ENCODE measurements at regions of chr12 and their contacts with region 1.

Region 1: GRCh38 chr12:85057370-85057963 is 21.3 kb downstream of the LRRIQ1 start:
- DNase-seq: no peak
- H3K4me3 ChIP-seq: no peak overlapping the region
- H3K27ac ChIP-seq: no peak overlapping the region
- H3K4me1 ChIP-seq: no peaks in the 10 kb centered on the region
- H3K27me3 ChIP-seq: no peaks in the 10 kb centered on the region
- CTCF ChIP-seq: peak; percentile 8 to 61 (median 50)
- EP300 ChIP-seq: no peak
- POLR2A ChIP-seq: no peak

Region 2: GRCh38 chr12:84874125-84874824 is 183.2 kb before region 1 on chr12:
- intact Hi-C with region 1: loop called (anchors 2 kb)
- DNase-seq: no peak
- H3K4me3 ChIP-seq: no peak overlapping the region
- H3K27ac ChIP-seq: no peak overlapping the region
- H3K4me1 ChIP-seq: no peaks in the 10 kb centered on the region
- H3K27me3 ChIP-seq: no peaks in the 10 kb centered on the region
- CTCF ChIP-seq: peak; percentile 39 to 75 (median 62)
- EP300 ChIP-seq: no peak
- POLR2A ChIP-seq: no peak

Region 3: GRCh38 chr12:84994426-84994825 is 63.0 kb before region 1 on chr12:
- intact Hi-C with region 1: no loop called
- DNase-seq: no peak
- H3K4me3 ChIP-seq: no peak overlapping the region
- H3K27ac ChIP-seq: no peak overlapping the region
- H3K4me1 ChIP-seq: no peaks in the 10 kb centered on the region
- H3K27me3 ChIP-seq: no peaks in the 10 kb centered on the region
- CTCF ChIP-seq: no peak
- EP300 ChIP-seq: no peak
- POLR2A ChIP-seq: no peak